ENCODE measurements at regions of chr5 and their contacts with region 1.

Region 1: DNA sequence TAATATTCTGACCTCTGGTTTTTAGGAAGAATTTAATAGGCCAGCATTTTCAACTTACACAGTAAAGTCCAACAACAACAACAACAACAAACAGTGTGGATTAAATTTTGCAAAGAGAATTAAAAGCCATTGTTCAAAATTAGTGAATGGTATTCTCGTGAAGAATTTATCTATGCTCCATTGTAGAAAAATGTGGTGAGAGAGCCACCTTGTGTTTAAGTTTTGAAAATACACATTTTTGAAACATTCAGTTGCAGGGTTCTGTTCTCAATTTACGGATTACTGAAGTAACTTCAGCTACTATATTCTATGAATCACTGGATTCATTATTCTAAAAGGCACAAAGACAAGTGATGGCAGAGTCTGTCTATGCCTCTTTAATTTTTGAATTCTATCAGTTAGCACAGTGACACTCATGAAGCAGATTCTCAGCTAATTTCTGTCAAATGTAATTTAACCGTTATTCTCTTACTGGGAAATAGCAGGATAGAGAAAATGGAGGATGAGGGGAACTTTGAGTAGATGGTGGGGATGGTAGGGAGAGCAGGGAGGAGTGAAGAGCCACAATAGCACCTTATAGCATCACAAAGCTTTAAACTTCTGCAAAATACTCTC is 11.0 kb downstream of the CCDC152 start:
- DNase-seq: no peak
- ATAC-seq: no peak
- H3K4me3 ChIP-seq: no peak overlapping the region
- H3K27ac ChIP-seq: no peak overlapping the region
- H3K4me1 ChIP-seq: peaks cover 6% of the 10 kb centered on the region in 2 donors
- H3K27me3 ChIP-seq: no peaks in the 10 kb centered on the region
- CTCF ChIP-seq: peak; percentile 52 to 60 (median 58)
- POLR2A ChIP-seq: no peak

Region 2: GRCh38 chr5:41869739-41870626 is 897.6 kb before region 1 on chr5 and contains the start of gene OXCT1:
- in situ Hi-C with region 1: loop called in 2 of 4 experiments (anchors 25 kb)
- intact Hi-C with region 1: no loop called
- DNase-seq: peak; percentile 38 to 62
- ATAC-seq: peak; percentile 71 to 80
- H3K4me3 ChIP-seq: peak within 1 kb of the TSS; percentile 74 to 87 (median 84)
- H3K27ac ChIP-seq: peak within 1 kb of the TSS; percentile 80 to 89 (median 86)
- H3K4me1 ChIP-seq: peaks cover 7 to 11% of the 10 kb centered on the region in 2 donors
- H3K27me3 ChIP-seq: no peaks in the 10 kb centered on the region
- CTCF ChIP-seq: no peak
- POLR2A ChIP-seq: peak; percentile 62 to 81
- total RNA-seq, gene OXCT1: 9.4 to 45.4 (median 20.5) TPM

Region 3: GRCh38 chr5:41924872-41925554 is 842.6 kb before region 1 on chr5 and contains the start of gene FBXO4:
- in situ Hi-C with region 1: no loop called
- intact Hi-C with region 1: loop called (anchors 5 kb)
- DNase-seq: peak; percentile 67 to 78
- ATAC-seq: peak; percentile 93 to 94
- H3K4me3 ChIP-seq: peak within 1 kb of the TSS; percentile 61 to 97 (median 84)
- H3K27ac ChIP-seq: peak within 1 kb of the TSS; percentile 86 to 97 (median 90)
- H3K4me1 ChIP-seq: peaks cover 0 to 22% of the 10 kb centered on the region in 2 donors
- H3K27me3 ChIP-seq: no peaks in the 10 kb centered on the region
- CTCF ChIP-seq: peak; percentile 13 to 65 (median 51)
- POLR2A ChIP-seq: peak; percentile 34 to 48
- total RNA-seq, gene FBXO4: 1.8 to 4.7 (median 3.1) TPM

Region 4: GRCh38 chr5:42005561-42006153 is 761.9 kb before region 1 on chr5:
- in situ Hi-C with region 1: loop called in 3 of 4 experiments (anchors 10 kb)
- intact Hi-C with region 1: loop called (anchors 10 kb)
- DNase-seq: no peak
- ATAC-seq: no peak
- H3K4me3 ChIP-seq: no peak overlapping the region
- H3K27ac ChIP-seq: no peak overlapping the region
- H3K4me1 ChIP-seq: no peaks in the 10 kb centered on the region
- H3K27me3 ChIP-seq: no peaks in the 10 kb centered on the region
- CTCF ChIP-seq: peak; percentile 7 to 55 (median 38)
- POLR2A ChIP-seq: no peak

Region 5: GRCh38 chr5:42309865-42310264 is 457.7 kb before region 1 on chr5:
- in situ Hi-C with region 1: no loop called
- intact Hi-C with region 1: loop called (anchors 5 kb)
- DNase-seq: no peak
- ATAC-seq: peak in 1 of 2 donors; percentile 46
- H3K4me3 ChIP-seq: no peak overlapping the region
- H3K27ac ChIP-seq: no peak overlapping the region
- H3K4me1 ChIP-seq: no peaks in the 10 kb centered on the region
- H3K27me3 ChIP-seq: no peaks in the 10 kb centered on the region
- CTCF ChIP-seq: no peak
- POLR2A ChIP-seq: no peak

Region 6: GRCh38 chr5:43699910-43700309 is 932.3 kb after region 1 on chr5:
- in situ Hi-C with region 1: no loop called
- intact Hi-C with region 1: no loop called
- DNase-seq: no peak
- ATAC-seq: peak in 1 of 2 donors; percentile 33
- H3K4me3 ChIP-seq: no peak overlapping the region
- H3K27ac ChIP-seq: peak overlapping the region in 2 of 4 donors; percentile 44 to 50
- H3K4me1 ChIP-seq: peaks cover 12 to 17% of the 10 kb centered on the region in 2 donors
- H3K27me3 ChIP-seq: no peaks in the 10 kb centered on the region
- CTCF ChIP-seq: no peak
- POLR2A ChIP-seq: no peak

Measured in gastrocnemius medialis (tissue), 4 donors.